ENCODE measurements at regions of chr20 and their contacts with region 1.

Region 1: DNA sequence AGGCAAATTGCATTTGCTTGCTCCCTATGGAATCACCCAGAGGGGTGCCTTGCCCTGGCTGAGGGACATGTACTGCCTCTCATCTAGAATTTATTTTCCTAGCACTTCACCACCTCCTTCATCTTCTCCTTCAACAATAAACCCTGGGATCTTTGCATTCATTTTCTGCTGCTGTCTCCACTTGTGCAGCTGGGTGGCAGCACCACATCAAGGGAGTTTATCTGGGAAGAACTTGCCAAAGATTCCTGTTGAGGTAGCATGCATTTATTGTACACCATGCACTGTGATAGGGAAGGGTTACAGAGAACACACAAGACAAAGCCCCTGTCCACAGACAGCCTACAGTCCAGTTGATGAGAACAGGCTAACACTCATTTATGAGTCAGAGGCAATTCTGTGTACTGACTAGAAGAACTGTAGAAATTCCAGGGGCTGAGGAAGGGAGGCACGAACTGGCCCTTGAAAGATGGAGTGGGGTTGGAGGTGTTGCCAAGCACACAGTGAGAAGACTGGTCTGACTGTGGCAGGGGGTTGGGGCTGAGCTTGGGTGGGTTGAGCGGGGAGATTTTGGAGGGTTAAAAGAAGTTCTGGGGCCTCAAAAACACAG is 17.5 kb downstream of the C20orf173 start:
- DNase-seq: peak in 1 of 2 experiments; percentile 68
- H3K4me3 ChIP-seq: no peak overlapping the region
- H3K4me3 Mint-ChIP-seq: no peak overlapping the region
- H3K27ac Mint-ChIP-seq: no peak overlapping the region
- H3K4me1 ChIP-seq: no peaks in the 10 kb centered on the region
- H3K4me1 Mint-ChIP-seq: no peaks in the 10 kb centered on the region
- H3K27me3 ChIP-seq: no peaks in the 10 kb centered on the region
- H3K27me3 Mint-ChIP-seq: no peaks in the 10 kb centered on the region
- CTCF ChIP-seq: peak; percentile 88 to 92

Region 2: GRCh38 chr20:34562643-34563042 is 949.3 kb before region 1 on chr20:
- CTCF ChIA-PET with region 1: no interaction called
- POLR2A ChIA-PET with region 1: interaction called, 10 read pairs
- intact Hi-C with region 1: no loop called
- DNase-seq: peak in 1 of 2 experiments; percentile 56
- H3K4me3 ChIP-seq: no peak overlapping the region
- H3K4me3 Mint-ChIP-seq: no peak overlapping the region
- H3K27ac Mint-ChIP-seq: no peak overlapping the region
- H3K4me1 ChIP-seq: no peaks in the 10 kb centered on the region
- H3K4me1 Mint-ChIP-seq: no peaks in the 10 kb centered on the region
- H3K27me3 ChIP-seq: no peaks in the 10 kb centered on the region
- H3K27me3 Mint-ChIP-seq: no peaks in the 10 kb centered on the region
- CTCF ChIP-seq: peak; percentile 52 to 61

Region 3: DNA sequence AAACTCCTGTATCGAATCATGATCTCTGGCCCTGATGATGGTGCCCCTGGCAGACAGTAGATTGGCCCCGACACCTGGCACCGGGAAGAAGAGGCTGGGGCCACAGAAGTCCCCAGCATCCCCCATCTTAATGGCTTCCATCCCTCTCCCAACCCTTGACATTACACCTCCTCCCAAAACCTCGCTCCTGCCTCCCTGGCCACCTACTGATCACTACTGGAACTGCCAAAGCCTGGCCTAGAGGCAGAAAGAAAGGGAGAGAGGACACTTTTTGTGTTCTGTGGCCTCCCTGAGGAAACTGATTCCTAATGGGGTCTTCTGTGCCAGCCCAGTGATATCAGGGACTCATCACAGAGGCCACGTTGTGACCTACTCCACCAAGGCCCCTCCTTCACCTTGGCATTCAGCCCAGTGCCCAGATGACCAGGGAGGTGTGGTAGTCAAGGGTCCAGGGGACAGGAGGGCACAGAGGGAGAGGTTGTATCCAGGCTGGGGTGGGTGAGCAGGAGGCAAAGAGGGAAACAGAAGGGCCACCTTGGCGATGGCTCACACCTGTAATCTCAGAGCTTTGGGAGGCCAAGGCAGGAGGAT is 11.5 kb after region 1 on chr20:
- CTCF ChIA-PET with region 1: no interaction called
- POLR2A ChIA-PET with region 1: no interaction called
- intact Hi-C with region 1: no loop called
- DNase-seq: peak in 1 of 2 experiments; percentile 77
- H3K4me3 ChIP-seq: no peak overlapping the region
- H3K4me3 Mint-ChIP-seq: no peak overlapping the region
- H3K27ac Mint-ChIP-seq: no peak overlapping the region
- H3K4me1 ChIP-seq: no peaks in the 10 kb centered on the region
- H3K4me1 Mint-ChIP-seq: no peaks in the 10 kb centered on the region
- H3K27me3 ChIP-seq: no peaks in the 10 kb centered on the region
- H3K27me3 Mint-ChIP-seq: no peaks in the 10 kb centered on the region
- CTCF ChIP-seq: peak; percentile 86 to 90

Region 4: DNA sequence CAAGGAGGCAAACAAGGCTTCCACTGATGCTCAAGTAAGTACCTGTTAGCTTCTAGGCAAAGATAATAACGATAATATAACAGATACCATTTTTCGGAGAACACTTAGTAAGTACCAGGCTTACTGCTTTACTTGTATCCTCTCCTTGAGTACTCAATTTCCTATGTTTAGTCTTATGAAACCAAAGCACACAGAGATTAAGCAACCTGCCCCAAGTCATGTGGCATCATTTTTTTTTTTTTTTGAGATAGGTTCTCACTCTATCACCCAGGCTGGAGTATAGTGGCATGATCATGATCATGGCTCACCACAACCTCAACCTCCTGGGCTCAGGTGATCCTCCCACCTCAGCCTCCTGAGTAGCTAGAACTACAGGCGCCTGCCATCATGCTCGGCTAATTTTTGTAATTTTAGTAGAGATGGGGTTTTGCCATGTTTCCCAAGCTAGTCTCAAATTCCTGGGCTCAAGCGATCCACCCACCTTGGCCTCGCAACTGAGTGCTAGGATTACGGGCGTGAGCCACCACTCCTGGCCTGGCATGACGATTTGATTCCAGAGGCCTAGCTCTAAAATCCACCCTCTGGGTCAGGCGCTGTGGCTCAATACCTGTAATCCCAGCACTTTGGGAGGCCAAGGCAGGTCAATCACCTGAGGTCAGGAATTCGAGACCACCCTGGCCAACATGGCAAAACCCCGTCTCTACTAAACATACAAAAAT is 117.7 kb after region 1 on chr20:
- CTCF ChIA-PET with region 1: interaction called, 3 read pairs
- POLR2A ChIA-PET with region 1: interaction called, 11 read pairs
- intact Hi-C with region 1: no loop called
- DNase-seq: no peak
- H3K4me3 ChIP-seq: no peak overlapping the region
- H3K4me3 Mint-ChIP-seq: no peak overlapping the region
- H3K27ac Mint-ChIP-seq: no peak overlapping the region
- H3K4me1 ChIP-seq: no peaks in the 10 kb centered on the region
- H3K4me1 Mint-ChIP-seq: peaks cover 6% of the 10 kb centered on the region
- H3K27me3 ChIP-seq: no peaks in the 10 kb centered on the region
- H3K27me3 Mint-ChIP-seq: no peaks in the 10 kb centered on the region
- CTCF ChIP-seq: no peak

Region 5: DNA sequence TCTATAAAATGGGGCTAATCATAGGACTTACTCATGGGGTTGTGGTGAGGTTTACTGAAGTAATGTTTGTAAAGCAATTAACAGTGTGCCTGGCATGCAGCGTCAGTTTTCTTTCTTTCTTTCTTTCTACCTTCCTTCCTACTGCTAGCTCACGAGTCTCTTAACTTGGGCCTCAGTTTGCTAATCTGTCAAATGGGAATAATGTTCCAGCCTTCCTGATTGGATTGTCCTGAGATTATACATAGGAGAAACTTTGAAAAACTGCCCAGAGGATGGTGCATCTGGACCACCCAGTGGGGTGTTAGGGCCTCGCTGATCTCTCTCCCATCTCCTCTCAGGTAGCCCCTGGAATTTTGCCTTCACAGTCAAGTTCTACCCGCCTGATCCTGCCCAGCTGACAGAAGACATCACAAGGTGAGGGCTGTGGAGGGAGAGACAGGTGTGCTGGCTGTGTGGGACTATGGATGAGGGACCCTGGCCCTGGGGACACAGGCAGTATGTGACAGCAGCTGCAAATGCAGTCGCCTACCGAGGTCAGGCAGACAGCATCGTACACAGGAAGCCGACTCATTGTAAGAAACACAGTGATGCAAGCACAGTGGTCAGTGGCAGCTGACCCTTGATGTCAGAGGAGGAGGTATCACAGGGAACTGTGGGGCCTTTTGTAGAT is 670.2 kb after region 1 on chr20:
- CTCF ChIA-PET with region 1: no interaction called
- POLR2A ChIA-PET with region 1: no interaction called
- intact Hi-C with region 1: no loop called
- DNase-seq: no peak
- H3K4me3 ChIP-seq: no peak overlapping the region
- H3K4me3 Mint-ChIP-seq: no peak overlapping the region
- H3K27ac Mint-ChIP-seq: no peak overlapping the region
- H3K4me1 ChIP-seq: no peaks in the 10 kb centered on the region
- H3K4me1 Mint-ChIP-seq: no peaks in the 10 kb centered on the region
- H3K27me3 ChIP-seq: no peaks in the 10 kb centered on the region
- H3K27me3 Mint-ChIP-seq: no peaks in the 10 kb centered on the region
- CTCF ChIP-seq: no peak

Measured in Caco-2 (cell line).